ENCODE measurements at regions of chr17 and their contacts with region 1.

Region 1: GRCh38 chr17:17280613-17281549 is at the start of gene COPS3:
- DNase-seq: peak; percentile 99
- ATAC-seq: peak; percentile 95
- H3K4me3 Mint-ChIP-seq: peak within 1 kb of the TSS; percentile 91
- H3K27ac Mint-ChIP-seq: peak within 1 kb of the TSS; percentile 94
- H3K4me1 Mint-ChIP-seq: peaks cover 39% of the 10 kb centered on the region
- H3K27me3 Mint-ChIP-seq: peaks cover 3% of the 10 kb centered on the region
- total RNA-seq, gene COPS3: 115 to 124 TPM

Region 2: GRCh38 chr17:17067257-17067656 is 213.6 kb before region 1 on chr17:
- CTCF ChIA-PET with region 1: no interaction called
- POLR2A ChIA-PET with region 1: no interaction called
- DNase-seq: no peak
- ATAC-seq: no peak
- H3K4me3 Mint-ChIP-seq: no peak overlapping the region
- H3K27ac Mint-ChIP-seq: no peak overlapping the region
- H3K4me1 Mint-ChIP-seq: peaks cover 47% of the 10 kb centered on the region
- H3K27me3 Mint-ChIP-seq: no peaks in the 10 kb centered on the region

Region 3: DNA sequence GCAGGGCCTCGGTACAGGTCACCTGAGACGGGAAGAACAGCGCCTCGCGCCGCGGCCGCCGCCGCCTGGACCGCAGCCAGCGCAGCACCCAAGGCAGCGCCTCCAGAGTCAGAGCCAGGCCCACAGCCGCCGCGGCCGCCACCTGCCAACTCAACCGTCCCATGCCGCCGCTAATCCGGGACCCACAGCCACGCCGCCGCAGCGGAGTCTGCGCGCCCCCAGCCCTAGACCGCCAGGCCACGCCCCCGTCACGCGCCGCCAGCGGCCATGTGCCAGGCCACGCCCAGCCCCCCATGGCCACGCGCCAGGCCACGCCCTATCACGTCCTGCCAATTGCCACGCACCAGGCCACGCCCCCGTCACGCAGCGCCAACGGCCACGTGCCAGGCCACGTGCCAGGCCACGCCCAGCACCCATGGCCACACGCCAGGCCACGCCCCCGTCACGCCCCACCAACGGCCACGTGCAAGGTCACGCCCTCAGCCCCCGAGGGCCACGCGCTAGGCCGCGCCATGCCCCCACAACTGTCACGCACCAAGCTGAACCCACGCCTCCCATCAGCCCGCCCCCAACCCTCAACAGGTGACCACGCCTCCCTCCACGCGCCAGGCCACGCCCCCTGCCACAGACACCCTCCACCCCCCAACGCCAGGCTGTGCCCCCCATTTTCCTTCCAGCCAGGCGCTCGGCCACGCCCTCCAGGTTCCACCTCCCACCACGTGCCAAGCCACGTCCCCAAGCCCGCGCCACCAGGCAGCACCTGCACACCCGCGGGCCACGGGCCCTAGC is 74.6 kb before region 1 on chr17 and contains the start of gene PLD6:
- CTCF ChIA-PET with region 1: no interaction called
- POLR2A ChIA-PET with region 1: no interaction called
- DNase-seq: peak; percentile 90
- ATAC-seq: peak; percentile 73
- H3K4me3 Mint-ChIP-seq: peak within 1 kb of the TSS; percentile 89
- H3K27ac Mint-ChIP-seq: peak within 1 kb of the TSS; percentile 92
- H3K4me1 Mint-ChIP-seq: peaks cover 33% of the 10 kb centered on the region
- H3K27me3 Mint-ChIP-seq: no peaks in the 10 kb centered on the region
- total RNA-seq, gene PLD6: 3.8 to 4.2 TPM

Region 4: GRCh38 chr17:17254036-17254435 is 26.8 kb before region 1 on chr17:
- CTCF ChIA-PET with region 1: no interaction called
- POLR2A ChIA-PET with region 1: no interaction called
- DNase-seq: no peak
- ATAC-seq: no peak
- H3K4me3 Mint-ChIP-seq: no peak overlapping the region
- H3K27ac Mint-ChIP-seq: no peak overlapping the region
- H3K4me1 Mint-ChIP-seq: no peaks in the 10 kb centered on the region
- H3K27me3 Mint-ChIP-seq: no peaks in the 10 kb centered on the region

Region 5: DNA sequence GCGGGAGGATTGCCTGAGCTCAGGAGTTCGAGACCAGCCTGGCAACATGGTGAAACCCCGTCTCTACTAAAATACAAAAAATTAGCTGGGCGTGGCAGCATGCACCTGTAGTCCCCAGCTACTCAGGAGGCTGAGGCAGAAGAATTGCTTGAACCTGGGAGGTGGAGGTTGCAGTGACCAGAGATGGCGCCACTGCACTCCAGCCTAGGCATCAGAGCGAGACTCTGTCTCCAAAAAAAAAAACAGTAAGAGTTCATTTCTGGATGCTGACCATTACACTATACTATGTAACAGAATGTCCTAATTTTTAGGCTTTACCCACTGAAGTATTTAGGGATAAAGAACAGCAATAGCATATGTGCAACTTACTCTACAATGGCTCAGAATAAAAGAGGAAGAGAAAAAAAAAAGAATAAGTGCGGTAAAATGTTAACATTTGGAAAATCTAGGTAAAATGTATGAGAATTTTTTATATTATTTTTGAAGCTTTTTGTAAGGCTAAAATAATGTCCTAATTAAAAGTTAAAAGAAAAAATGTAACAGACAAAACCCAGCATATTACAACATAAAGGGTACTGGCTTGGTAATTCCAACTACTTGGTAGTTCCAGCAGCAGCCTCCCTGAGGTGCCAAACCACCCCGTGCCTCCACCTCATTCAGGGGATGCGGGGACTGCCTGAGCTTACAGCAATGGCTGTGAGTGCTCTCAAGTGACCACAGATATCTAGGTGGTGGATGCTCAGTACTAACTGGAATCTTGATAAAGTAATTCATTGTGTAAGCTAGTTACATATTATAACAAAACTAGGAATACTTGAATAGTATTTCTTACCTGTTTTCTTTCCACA is 10.7 kb before region 1 on chr17:
- CTCF ChIA-PET with region 1: interaction called, 39 read pairs
- POLR2A ChIA-PET with region 1: interaction called, 5 read pairs
- DNase-seq: peak; percentile 44
- ATAC-seq: no peak
- H3K4me3 Mint-ChIP-seq: no peak overlapping the region
- H3K27ac Mint-ChIP-seq: no peak overlapping the region
- H3K4me1 Mint-ChIP-seq: peaks cover 2% of the 10 kb centered on the region
- H3K27me3 Mint-ChIP-seq: no peaks in the 10 kb centered on the region

Region 6: GRCh38 chr17:17303010-17303846 is 22.3 kb after region 1 on chr17 and contains the start of gene NT5M:
- CTCF ChIA-PET with region 1: interaction called, 12 read pairs
- POLR2A ChIA-PET with region 1: interaction called, 33 read pairs
- DNase-seq: peak; percentile 79
- ATAC-seq: peak; percentile 81
- H3K4me3 Mint-ChIP-seq: peak within 1 kb of the TSS; percentile 93
- H3K27ac Mint-ChIP-seq: peak within 1 kb of the TSS; percentile 94
- H3K4me1 Mint-ChIP-seq: peaks cover 48% of the 10 kb centered on the region
- H3K27me3 Mint-ChIP-seq: no peaks in the 10 kb centered on the region
- total RNA-seq, gene NT5M: 8.3 to 9.0 TPM

Region 7: GRCh38 chr17:17313350-17313991 is 32.6 kb after region 1 on chr17:
- CTCF ChIA-PET with region 1: interaction called, 10 read pairs
- POLR2A ChIA-PET with region 1: interaction called, 7 read pairs
- DNase-seq: peak; percentile 82
- ATAC-seq: peak; percentile 98
- H3K4me3 Mint-ChIP-seq: no peak overlapping the region
- H3K27ac Mint-ChIP-seq: no peak overlapping the region
- H3K4me1 Mint-ChIP-seq: peaks cover 7% of the 10 kb centered on the region
- H3K27me3 Mint-ChIP-seq: no peaks in the 10 kb centered on the region